HEK293 (cell line): ENCODE measurements at regions of chr3 and their contacts with region 1.

Region 1: GRCh38 chr3:196684548-196685407 is 27.3 kb downstream of the CEP19 start:
- H3K4me3 ChIP-seq: no peak overlapping the region
- H3K27ac ChIP-seq: no peak overlapping the region
- H3K4me1 ChIP-seq: no peaks in the 10 kb centered on the region
- CTCF ChIP-seq: peak; percentile 35; the same call in 1 of the 2 replicates

Region 2: DNA sequence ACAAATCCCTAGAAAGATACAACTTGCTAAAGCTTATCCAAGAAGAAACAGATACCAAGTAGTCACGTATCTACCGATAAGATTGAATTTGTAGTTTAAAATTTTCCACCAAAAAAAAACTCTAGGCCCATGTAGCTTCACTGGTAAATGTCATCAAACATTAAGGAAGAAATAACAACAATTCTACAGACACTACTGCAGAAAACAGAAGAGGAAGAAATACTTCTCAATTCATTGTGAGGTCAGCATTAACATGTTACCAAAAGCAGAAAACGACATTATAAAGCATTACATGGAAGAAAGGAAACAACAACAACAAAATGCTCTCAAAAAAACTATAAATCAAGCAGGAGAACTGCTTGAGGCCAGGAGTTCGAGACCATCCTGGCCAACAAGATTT is 319.0 kb before region 1 on chr3:
- CTCF ChIA-PET with region 1: no interaction called
- POLR2A ChIA-PET with region 1: no interaction called
- H3K4me3 ChIP-seq: no peak overlapping the region
- H3K27ac ChIP-seq: no peak overlapping the region
- H3K4me1 ChIP-seq: no peaks in the 10 kb centered on the region
- CTCF ChIP-seq: no peak

Region 3: DNA sequence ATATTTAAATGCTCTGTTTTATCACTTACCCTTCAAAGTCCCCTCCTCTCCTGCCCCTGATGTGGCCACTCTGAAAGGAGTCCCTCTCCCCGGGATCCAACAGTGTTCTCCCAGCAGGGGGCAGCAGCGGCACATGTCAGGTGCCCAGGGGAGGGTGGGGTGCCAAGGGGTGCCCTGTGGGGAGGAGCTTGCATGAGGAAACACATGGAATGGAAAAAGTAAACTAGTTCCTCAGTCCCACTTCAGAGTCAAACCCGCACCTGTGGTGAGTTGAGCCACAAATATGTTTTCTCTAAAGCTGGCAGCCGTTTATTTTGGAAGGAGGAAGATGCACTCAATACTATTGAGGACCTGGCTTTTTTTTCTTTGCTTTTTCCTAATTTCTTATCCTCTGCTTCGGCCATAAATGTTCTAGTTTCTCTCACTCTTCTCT is 75.4 kb before region 1 on chr3:
- CTCF ChIA-PET with region 1: interaction called, 42 read pairs
- POLR2A ChIA-PET with region 1: interaction called, 3 read pairs
- H3K4me3 ChIP-seq: no peak overlapping the region
- H3K27ac ChIP-seq: no peak overlapping the region
- H3K4me1 ChIP-seq: no peaks in the 10 kb centered on the region
- CTCF ChIP-seq: no peak

Region 4: DNA sequence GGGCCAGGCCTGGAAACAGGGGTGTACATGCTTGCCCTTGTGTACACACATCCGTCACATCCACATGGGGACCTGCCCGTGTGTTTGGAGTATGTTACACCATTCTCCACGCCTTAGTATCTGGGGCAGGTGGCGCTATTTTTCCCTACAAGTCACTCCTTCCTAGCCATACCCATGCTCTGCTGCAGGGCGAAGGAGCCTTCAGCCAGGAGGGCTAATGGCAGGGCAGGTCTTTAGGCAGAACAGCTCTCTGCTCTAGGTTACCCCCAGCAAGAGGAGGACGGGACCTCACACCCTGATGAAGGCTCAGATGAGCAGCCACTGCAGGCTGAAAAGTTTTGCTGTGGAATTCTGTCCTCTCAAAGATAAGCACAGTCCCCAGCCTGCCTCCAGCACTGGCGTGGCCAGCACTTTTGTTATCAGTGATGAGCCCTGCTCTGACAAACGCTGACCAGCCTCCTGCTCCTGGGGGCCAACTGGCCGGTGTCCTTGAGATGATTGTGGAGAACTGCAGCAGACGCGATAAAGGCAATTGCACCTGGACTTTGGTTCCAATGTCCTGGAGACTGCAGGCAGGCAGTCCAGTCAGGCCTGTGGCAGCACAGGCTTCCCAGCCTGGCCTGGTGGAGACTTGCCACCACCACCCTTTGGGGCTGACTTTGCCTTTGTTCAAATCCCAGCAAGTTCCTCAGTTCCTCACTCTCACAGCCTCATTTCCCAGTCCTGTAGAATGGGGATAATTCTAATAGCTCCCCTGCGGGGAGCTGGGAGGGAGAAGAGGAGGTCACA is 303.7 kb after region 1 on chr3:
- CTCF ChIA-PET with region 1: no interaction called
- POLR2A ChIA-PET with region 1: no interaction called
- H3K4me3 ChIP-seq: no peak overlapping the region
- H3K27ac ChIP-seq: no peak overlapping the region
- H3K4me1 ChIP-seq: no peaks in the 10 kb centered on the region
- CTCF ChIP-seq: 0 out of 2 replicates have a peak, but pooled peaks have one; percentile 30